ENCODE measurements at regions of chr6 and their contacts with region 1.

Region 1: GRCh38 chr6:37018198-37019064 is 13.0 kb downstream of the FGD2 start:
- DNase-seq: peak; percentile 87

Region 2: DNA sequence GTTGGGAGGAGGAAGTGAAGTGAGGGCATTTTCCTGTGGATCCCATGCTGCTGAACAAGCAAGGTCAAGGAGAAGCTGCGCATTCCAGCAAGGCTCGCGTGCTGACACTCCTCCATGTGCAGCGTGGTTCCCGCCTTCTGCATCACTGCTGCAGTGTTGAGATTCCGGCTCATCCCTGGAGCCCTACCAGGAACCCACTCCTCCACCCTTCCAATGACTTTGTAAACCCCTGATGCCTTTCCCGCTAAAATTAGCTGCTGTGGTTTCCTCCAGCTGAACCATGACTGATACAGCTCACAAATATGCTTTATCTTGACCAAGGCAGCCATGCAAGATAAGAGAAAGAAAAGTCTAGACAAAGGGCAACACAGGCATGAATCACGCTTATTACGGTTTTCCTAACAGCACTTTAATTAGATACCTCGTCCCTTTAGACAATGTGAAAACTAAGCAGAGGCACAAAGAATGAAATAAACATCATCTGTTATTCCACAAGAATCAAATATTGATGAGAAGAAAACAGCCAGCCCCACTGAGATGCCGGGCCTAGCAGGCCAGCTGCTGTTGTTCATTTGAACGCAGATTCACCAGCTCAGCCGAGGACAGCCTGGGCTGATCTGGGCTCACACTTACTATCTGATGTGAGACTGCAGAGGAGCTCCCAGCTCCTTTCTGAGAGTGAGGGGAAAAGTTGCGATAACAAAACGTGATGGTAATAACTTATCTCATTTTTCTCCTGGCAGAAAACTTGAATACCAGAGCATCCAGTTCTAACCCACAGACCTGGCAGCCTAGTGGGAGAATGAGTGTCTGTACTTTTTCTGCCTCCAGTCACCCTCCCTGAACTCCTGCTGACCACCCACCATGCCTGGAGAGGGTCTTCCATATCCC is 667.5 kb before region 1 on chr6:
- CTCF ChIA-PET with region 1: no interaction called
- POLR2A ChIA-PET with region 1: no interaction called
- DNase-seq: no peak

Region 3: GRCh38 chr6:36765594-36766398 is 252.6 kb before region 1 on chr6:
- CTCF ChIA-PET with region 1: interaction called, 31 read pairs
- POLR2A ChIA-PET with region 1: no interaction called
- DNase-seq: peak; percentile 83

Region 4: DNA sequence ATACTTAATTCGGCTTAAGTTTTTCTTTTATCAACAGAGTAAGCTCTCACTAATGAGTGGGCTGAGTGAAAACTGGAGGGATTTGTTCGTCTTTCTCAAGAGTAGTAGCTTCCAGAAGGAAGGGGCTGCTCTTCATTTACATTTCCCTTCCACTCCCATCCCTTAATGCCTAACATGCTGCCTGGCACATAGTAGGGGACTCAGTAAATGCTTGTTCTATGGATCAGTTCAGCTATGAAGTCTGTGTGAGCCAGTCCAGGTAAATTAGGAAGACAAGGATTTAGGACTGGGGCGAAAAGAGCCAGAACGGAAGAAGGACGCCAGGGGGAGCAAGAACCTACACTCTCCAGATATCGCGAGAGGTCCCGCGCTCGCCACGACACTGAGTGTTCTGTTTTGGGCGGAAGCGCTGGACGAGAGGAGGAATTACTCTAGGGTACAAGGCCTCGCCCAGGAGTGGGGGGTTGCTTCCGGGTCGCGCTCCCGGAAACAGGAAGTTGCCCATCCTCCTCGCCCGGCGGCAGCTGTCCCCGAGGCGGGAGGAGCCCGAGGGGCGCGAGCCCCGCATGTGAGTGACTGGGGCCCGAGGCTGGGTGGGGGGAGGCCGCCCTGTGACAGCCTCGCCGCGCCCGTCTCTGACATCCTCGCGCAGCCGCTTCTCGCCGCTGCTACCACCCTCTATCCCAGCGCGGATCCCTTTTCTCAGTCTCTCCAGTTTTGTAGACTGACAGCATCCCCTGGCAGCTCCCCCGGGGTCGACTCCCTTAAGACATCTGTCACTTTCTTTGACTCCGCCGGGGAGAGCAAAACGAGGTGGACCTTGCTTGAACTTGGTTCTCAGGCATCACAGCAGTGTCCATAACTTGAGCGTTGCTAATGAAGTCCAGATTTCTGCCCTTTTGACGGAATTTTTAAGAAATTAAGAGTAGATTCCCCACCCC is 132.7 kb before region 1 on chr6 and contains the start of gene C6orf89:
- CTCF ChIA-PET with region 1: interaction called, 16 read pairs
- POLR2A ChIA-PET with region 1: no interaction called
- DNase-seq: peak; percentile 93

Region 5: GRCh38 chr6:36985808-36986703 is 32.4 kb before region 1 on chr6 and contains the start of gene MTCH1:
- CTCF ChIA-PET with region 1: interaction called, 12 read pairs
- POLR2A ChIA-PET with region 1: interaction called, 11 read pairs
- DNase-seq: peak; percentile 95

Region 6: GRCh38 chr6:37051138-37052026 is 33.0 kb after region 1 on chr6:
- CTCF ChIA-PET with region 1: interaction called, 14 read pairs
- POLR2A ChIA-PET with region 1: no interaction called
- DNase-seq: peak; percentile 81

Region 7: DNA sequence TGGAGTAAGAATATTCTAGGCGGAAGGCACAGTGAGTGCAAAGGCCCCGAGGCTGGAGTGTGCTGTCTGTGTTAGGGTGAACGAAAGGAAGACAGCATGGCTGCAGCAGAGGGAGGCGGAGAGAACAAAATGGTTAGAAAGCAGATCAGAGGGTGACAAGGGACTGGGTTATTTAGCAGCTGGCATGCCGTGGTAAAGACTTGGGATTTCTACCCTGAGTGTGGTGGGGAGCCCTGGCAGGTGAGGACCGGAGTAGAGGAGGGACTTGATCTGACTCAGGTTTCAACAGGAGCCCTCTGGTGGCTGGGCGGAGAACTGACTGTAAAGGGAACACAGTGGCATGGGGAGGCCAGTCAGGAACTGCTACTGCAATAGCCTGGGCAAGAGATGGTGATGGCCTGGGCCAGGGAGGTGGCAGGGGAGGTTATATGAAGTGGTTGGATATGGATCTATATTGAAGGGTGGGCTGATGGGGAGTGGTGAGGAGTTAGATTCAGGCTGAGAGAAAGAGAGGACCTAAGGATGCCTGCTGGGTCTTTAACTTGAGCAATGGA is 189.5 kb after region 1 on chr6:
- CTCF ChIA-PET with region 1: interaction called, 47 read pairs
- POLR2A ChIA-PET with region 1: interaction called, 3 read pairs
- DNase-seq: peak; percentile 82

Measured in HEK293T (cell line).